ENCODE measurements at regions of chr6 and their contacts with region 1.

Region 1: DNA sequence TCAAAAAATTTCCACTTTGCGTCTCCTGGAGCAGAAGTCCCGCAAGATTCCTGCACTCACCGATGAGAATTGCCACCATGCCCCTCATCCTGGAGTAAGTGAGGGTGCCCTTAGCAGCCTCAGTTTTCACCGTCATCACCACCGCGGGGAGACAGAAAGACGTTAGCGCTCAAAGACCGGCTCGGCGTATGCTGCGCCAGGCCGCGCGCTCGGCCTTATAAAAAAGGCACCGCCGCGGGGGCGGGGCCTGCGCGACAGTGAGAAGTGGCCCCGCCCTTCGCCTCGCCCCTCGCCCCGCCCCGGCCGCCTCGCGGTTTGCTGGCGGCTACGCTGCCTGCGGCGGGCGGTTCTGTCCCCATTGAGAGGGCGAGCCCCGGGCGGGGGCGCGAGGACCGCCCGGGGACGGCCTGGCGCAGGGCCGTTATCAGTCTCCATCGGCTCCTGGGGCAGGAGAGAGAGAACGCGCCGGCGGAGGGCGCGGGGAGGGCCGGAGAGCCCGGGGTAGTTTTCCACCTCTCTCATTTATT is 122.3 kb upstream of the SLC2A12 start:
- DNase-seq: peak; percentile 92
- H3K4me3 Mint-ChIP-seq: peak overlapping the region; percentile 88
- H3K27ac Mint-ChIP-seq: peak overlapping the region; percentile 84
- H3K4me1 Mint-ChIP-seq: peaks cover 44% of the 10 kb centered on the region
- H3K27me3 Mint-ChIP-seq: no peaks in the 10 kb centered on the region
- CTCF ChIP-seq: no peak

Region 2: DNA sequence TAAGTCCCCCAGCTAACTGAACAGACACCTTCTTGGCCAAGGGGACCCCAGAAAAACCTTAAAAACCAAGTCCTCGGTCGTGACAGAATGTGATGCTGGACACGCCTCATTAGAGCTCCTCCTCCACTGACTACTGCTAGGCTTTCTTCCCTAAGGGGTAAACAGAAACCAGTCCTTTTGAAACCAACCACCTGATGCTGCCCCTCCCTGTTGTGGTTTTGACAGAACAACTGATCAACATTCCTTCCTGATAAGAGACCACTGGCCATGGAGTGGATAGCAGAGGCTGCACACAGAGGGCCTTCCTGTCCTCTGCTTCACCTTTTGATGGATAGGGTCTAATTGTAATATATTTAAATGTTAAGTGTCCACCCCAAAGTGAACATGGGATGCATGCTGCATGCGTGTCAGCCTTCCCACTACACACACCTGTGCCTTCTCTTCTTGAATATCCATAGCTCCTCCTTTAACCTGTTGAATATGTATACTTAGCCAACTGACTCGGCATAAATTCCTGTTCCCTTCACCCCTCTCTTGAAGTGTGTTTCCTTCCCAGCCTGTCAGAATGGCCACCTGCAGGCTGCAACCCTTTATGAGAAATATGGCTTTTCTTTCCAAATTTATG is 94.5 kb before region 1 on chr6:
- CTCF ChIA-PET with region 1: no interaction called
- intact Hi-C with region 1: no loop called
- DNase-seq: peak; percentile 26
- H3K4me3 Mint-ChIP-seq: no peak overlapping the region
- H3K27ac Mint-ChIP-seq: no peak overlapping the region
- H3K4me1 Mint-ChIP-seq: peaks cover 31% of the 10 kb centered on the region
- H3K27me3 Mint-ChIP-seq: no peaks in the 10 kb centered on the region
- CTCF ChIP-seq: no peak

Region 3: DNA sequence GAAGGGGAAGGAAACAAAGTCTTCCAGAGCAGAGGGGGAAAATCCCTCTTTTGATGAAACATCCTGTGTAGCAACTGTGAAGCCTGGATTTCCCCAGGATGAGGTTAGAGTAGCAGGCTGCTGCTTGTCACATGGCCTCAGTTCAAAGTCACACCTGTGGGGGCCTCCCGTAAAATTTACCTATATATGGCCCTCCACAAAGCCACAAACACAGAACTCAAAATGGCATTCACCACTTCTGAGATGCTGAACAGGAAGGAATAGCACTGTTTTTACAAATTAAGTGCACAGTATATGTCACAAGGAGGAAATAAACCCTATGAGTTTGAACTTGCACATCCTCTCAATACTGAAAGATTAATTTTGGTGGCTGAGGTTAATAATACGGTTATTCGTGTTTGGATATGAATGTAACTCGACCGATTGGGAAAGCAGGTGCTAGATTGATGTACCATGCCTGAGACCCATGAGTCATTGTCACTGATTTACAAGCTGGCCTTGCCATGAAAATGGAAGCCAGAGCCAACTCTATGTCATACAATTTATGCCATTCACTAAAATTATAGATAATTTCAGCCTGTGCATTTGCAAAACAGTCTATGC is 72.6 kb after region 1 on chr6:
- CTCF ChIA-PET with region 1: no interaction called
- intact Hi-C with region 1: no loop called
- DNase-seq: peak; percentile 35
- H3K4me3 Mint-ChIP-seq: no peak overlapping the region
- H3K27ac Mint-ChIP-seq: peak overlapping the region; percentile 82
- H3K4me1 Mint-ChIP-seq: peaks cover 27% of the 10 kb centered on the region
- H3K27me3 Mint-ChIP-seq: no peaks in the 10 kb centered on the region
- CTCF ChIP-seq: no peak

Region 4: DNA sequence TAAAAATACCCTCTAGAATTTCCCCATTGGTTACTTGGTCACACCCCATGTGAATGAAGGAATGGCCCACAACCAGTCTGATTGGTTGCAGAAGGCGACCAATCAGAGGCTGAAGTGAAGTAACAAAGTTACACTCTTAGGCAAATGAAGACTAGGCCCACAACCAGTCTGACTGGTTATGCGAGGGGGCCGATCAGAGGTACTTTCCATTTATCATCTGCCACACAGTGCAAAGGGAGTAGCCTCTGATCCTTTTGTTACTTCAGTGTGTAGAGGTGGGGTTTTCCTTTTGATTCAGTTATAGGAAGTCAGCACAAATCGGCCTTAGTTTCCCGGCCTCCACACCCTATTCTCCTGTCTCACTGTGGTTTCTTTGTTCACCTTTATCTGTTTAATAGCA is 204.4 kb after region 1 on chr6:
- CTCF ChIA-PET with region 1: no interaction called
- intact Hi-C with region 1: loop called (anchors 2 kb)
- DNase-seq: peak; percentile 89
- H3K4me3 Mint-ChIP-seq: no peak overlapping the region
- H3K27ac Mint-ChIP-seq: peak overlapping the region; percentile 0
- H3K4me1 Mint-ChIP-seq: peaks cover 29% of the 10 kb centered on the region
- H3K27me3 Mint-ChIP-seq: no peaks in the 10 kb centered on the region
- CTCF ChIP-seq: no peak

Region 5: DNA sequence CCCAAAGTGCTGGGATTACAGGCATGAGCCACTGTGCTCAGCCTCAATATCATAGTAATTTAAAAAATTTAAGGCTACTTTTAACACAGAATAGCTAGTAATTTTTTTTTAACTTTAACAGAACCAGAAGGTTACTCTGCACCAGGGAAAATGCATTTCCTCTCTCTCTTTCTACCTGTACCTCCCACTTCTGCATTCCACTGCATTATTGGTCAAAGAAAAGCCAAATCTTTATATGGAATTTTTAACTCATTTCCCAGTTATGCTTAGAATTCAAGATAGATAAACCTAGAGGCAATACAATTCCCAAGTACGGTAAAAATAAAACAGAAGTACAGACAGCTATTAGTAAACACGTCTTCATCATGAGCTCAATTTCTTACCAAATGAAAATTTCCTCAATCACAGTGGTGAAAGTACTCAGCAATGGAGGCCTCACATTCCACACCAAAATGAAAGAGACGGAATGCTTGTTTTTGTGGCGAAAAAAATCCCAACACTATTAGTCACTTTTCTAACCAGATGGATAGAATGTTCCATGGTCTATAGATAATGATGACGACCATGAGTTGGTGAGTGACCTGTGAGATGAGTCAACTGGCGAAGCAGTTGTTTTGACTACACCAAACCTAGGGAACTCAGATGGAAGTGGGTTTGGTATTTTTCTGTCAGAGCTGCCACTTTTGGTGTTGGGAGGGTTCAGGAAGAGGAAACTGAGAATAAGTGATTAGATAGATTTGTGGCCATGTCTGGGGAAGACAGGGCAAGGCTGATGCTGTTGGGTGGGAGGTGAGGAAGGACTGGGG is 247.9 kb after region 1 on chr6:
- CTCF ChIA-PET with region 1: no interaction called
- intact Hi-C with region 1: no loop called
- DNase-seq: no peak
- H3K4me3 Mint-ChIP-seq: no peak overlapping the region
- H3K27ac Mint-ChIP-seq: no peak overlapping the region
- H3K4me1 Mint-ChIP-seq: peaks cover 21% of the 10 kb centered on the region
- H3K27me3 Mint-ChIP-seq: no peaks in the 10 kb centered on the region
- CTCF ChIP-seq: no peak

Region 6: DNA sequence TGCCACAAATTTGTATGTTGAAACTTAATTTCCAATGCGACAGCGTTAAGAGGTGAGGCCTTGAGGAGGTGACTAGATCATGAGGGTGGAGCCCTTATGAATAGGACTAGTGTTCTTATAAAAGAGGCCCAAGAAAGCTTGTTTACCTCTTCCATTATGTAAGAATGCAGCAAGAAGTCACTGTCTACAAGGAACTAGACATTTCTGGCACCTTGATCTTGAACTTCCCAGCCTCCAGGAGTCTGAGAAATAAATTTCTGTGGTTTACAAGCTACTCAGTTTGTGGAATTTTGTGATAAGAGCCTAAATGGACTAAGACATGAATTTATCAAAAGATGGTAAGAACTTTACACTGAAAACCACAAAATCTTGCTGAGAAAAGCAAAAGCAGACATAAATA is 316.7 kb after region 1 on chr6:
- CTCF ChIA-PET with region 1: no interaction called
- intact Hi-C with region 1: loop called (anchors 5 kb)
- DNase-seq: peak; percentile 42
- H3K4me3 Mint-ChIP-seq: no peak overlapping the region
- H3K27ac Mint-ChIP-seq: peak overlapping the region; percentile 79
- H3K4me1 Mint-ChIP-seq: peaks cover 34% of the 10 kb centered on the region
- H3K27me3 Mint-ChIP-seq: no peaks in the 10 kb centered on the region
- CTCF ChIP-seq: no peak

Region 7: GRCh38 chr6:134640975-134641429 is 466.3 kb after region 1 on chr6:
- CTCF ChIA-PET with region 1: interaction called, 13 read pairs
- intact Hi-C with region 1: loop called (anchors 1 kb)
- DNase-seq: peak; percentile 75
- H3K4me3 Mint-ChIP-seq: no peak overlapping the region
- H3K27ac Mint-ChIP-seq: no peak overlapping the region
- H3K4me1 Mint-ChIP-seq: peaks cover 27% of the 10 kb centered on the region
- H3K27me3 Mint-ChIP-seq: no peaks in the 10 kb centered on the region
- CTCF ChIP-seq: peak; percentile 85

Region 8: GRCh38 chr6:134822920-134823709 is 648.4 kb after region 1 on chr6:
- CTCF ChIA-PET with region 1: interaction called, 6 read pairs
- intact Hi-C with region 1: loop called (anchors 1 kb)
- DNase-seq: peak; percentile 55
- H3K4me3 Mint-ChIP-seq: no peak overlapping the region
- H3K27ac Mint-ChIP-seq: no peak overlapping the region
- H3K4me1 Mint-ChIP-seq: peaks cover 10% of the 10 kb centered on the region
- H3K27me3 Mint-ChIP-seq: no peaks in the 10 kb centered on the region
- CTCF ChIP-seq: peak; percentile 81